MCF 10A (cell line): ENCODE measurements at regions of chr10 and their contacts with region 1.

Region 1: DNA sequence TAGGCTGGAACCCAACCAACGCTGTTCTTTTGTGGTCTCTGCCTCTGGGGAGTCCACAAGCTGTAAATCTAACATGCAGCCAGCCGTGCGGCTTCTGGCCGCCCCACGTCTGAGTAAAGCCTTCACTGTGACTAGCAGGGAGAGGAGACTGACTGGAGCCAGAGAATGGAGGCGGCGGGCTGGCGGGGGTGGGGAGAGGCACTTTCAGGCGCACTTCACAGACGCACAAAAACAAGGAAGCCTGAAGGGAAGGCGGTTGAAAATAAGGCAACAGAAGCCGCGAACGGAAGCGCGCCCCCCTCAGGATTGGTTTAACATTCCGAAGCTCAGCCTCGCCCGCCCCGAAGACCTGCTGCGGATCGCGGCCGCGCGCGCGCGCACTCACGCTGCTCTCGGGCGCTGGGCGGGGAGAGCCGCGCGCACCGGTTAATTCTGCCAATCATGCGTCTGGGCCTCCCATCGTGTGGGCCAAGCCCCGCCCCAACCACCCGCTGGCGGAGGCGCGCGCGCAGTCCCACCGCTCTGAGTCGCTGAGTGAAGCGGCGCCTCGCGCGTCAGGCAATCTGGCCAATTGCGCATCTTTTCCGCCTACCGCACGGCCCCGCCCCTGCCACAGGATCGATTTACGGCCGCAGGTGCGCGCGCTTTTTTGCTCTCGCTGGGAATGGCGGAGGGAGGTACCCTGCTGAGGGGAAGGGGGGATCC is at the start of gene SFR1:
- DNase-seq: peak; percentile 98
- H3K4me3 Mint-ChIP-seq: peak within 1 kb of the TSS; percentile 79
- H3K27ac Mint-ChIP-seq: peak within 1 kb of the TSS; percentile 99
- H3K4me1 Mint-ChIP-seq: peaks cover 45% of the 10 kb centered on the region
- H3K27me3 Mint-ChIP-seq: no peaks in the 10 kb centered on the region
- CTCF ChIP-seq: peak; percentile 52
- total RNA-seq, gene SFR1: 7.7 and 8.9 TPM in 2 replicates

Region 2: DNA sequence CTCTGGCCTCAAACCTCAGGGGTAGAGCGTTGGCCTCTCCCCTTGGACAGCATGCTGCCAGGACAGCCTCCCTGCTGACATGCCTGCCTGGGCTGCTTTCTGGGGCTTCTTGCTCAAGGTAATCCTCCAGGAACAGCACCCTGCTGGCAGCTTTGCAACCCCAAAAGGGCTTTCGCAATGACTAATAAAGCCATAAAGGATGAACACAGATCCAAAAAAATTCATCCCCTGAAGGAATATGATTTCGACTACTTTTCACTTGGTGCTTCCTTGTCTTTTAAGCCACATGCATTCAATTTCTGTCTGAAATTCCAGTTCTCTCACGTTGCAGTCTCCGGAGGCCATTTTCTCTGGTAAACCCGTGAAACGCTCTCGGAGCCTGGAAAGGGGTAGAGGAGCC is 251.2 kb before region 1 on chr10:
- CTCF ChIA-PET with region 1: interaction called, 3 read pairs
- POLR2A ChIA-PET with region 1: interaction called, 22 read pairs
- intact Hi-C with region 1: no loop called
- DNase-seq: peak; percentile 97
- H3K4me3 Mint-ChIP-seq: peak overlapping the region; percentile 70
- H3K27ac Mint-ChIP-seq: peak overlapping the region; percentile 97
- H3K4me1 Mint-ChIP-seq: peaks cover 29% of the 10 kb centered on the region
- H3K27me3 Mint-ChIP-seq: no peaks in the 10 kb centered on the region
- CTCF ChIP-seq: no peak

Region 3: GRCh38 chr10:104028146-104028545 is 93.5 kb before region 1 on chr10:
- CTCF ChIA-PET with region 1: interaction called, 8 read pairs
- POLR2A ChIA-PET with region 1: interaction called, 53 read pairs
- intact Hi-C with region 1: no loop called
- DNase-seq: peak; percentile 20
- H3K4me3 Mint-ChIP-seq: no peak overlapping the region
- H3K27ac Mint-ChIP-seq: peak overlapping the region; percentile 75
- H3K4me1 Mint-ChIP-seq: no peaks in the 10 kb centered on the region
- H3K27me3 Mint-ChIP-seq: no peaks in the 10 kb centered on the region
- CTCF ChIP-seq: peak; percentile 20

Region 4: DNA sequence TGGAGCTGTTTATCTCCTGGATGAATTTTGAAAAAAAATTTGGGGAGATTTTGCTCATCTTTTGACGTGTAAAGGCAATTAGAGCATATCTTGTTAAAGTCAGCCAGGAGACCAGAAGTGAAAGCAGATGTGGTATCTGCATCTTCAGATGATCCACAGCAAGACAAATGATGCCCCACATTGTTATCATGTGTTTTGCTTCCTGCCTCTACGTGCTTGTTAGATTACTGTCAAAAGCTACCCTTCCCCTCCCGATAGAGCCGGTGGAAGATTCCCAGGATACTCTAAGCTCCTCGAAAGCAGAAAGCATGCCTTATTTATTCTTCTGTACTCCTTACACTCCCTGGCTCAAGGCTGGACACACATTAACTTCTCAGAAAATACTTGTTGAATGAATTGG is 48.9 kb before region 1 on chr10:
- CTCF ChIA-PET with region 1: interaction called, 35 read pairs
- POLR2A ChIA-PET with region 1: interaction called, 1,749 read pairs
- intact Hi-C with region 1: no loop called
- DNase-seq: no peak
- H3K4me3 Mint-ChIP-seq: no peak overlapping the region
- H3K27ac Mint-ChIP-seq: no peak overlapping the region
- H3K4me1 Mint-ChIP-seq: no peaks in the 10 kb centered on the region
- H3K27me3 Mint-ChIP-seq: no peaks in the 10 kb centered on the region
- CTCF ChIP-seq: no peak

Region 5: DNA sequence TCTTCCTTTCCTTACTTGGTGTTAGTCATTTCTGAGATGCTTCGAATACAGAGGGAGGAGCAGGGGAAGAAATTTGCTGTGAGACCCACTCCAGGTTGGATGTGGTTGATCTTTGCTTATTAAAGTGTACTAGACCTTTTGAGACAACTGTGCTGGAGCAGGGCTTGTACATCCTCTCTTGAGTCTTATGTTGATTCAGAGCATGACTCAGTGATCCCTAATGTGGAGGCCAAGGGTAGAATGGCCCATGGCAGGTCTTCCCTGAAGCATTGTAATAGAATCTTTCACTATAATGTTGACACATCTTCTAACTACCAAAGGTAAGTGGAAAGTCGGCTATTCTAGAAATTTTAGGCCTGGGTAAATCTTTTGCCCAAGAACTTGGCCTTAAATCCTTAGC is 16.7 kb before region 1 on chr10:
- CTCF ChIA-PET with region 1: interaction called, 6 read pairs
- POLR2A ChIA-PET with region 1: interaction called, 82 read pairs
- intact Hi-C with region 1: no loop called
- DNase-seq: peak; percentile 27
- H3K4me3 Mint-ChIP-seq: no peak overlapping the region
- H3K27ac Mint-ChIP-seq: no peak overlapping the region
- H3K4me1 Mint-ChIP-seq: peaks cover 9% of the 10 kb centered on the region
- H3K27me3 Mint-ChIP-seq: no peaks in the 10 kb centered on the region
- CTCF ChIP-seq: no peak

Region 6: GRCh38 chr10:104254493-104255310 is 133.0 kb after region 1 on chr10 and contains the start of gene GSTO1:
- CTCF ChIA-PET with region 1: interaction called, 5 read pairs
- POLR2A ChIA-PET with region 1: interaction called, 34 read pairs
- intact Hi-C with region 1: no loop called
- DNase-seq: peak; percentile 79
- H3K4me3 Mint-ChIP-seq: peak within 1 kb of the TSS; percentile 80
- H3K27ac Mint-ChIP-seq: peak within 1 kb of the TSS; percentile 85
- H3K4me1 Mint-ChIP-seq: peaks cover 28% of the 10 kb centered on the region
- H3K27me3 Mint-ChIP-seq: no peaks in the 10 kb centered on the region
- CTCF ChIP-seq: no peak
- total RNA-seq, gene GSTO1: 54.6 and 61.8 TPM in 2 replicates

Region 7: GRCh38 chr10:104456802-104457542 is 335.3 kb after region 1 on chr10:
- CTCF ChIA-PET with region 1: no interaction called
- POLR2A ChIA-PET with region 1: no interaction called
- intact Hi-C with region 1: no loop called
- DNase-seq: no peak
- H3K4me3 Mint-ChIP-seq: no peak overlapping the region
- H3K27ac Mint-ChIP-seq: peak overlapping the region; percentile 48
- H3K4me1 Mint-ChIP-seq: peaks cover 13% of the 10 kb centered on the region
- H3K27me3 Mint-ChIP-seq: no peaks in the 10 kb centered on the region
- CTCF ChIP-seq: no peak